Panc1 (cell line): ENCODE measurements at regions of chr4 and their contacts with region 1.

Region 1: GRCh38 chr4:186570193-186570996 is 15.0 kb upstream of the MTNR1A start:
- DNase-seq: no peak
- ATAC-seq: peak; percentile 79
- H3K4me3 ChIP-seq: peak overlapping the region; percentile 26 to 55
- H3K27ac ChIP-seq: peak overlapping the region; percentile 48; the same call in 1 of the 2 replicates
- H3K4me1 ChIP-seq: peaks cover 5% of the 10 kb centered on the region; the same call in 1 of the 2 replicates
- H3K27me3 ChIP-seq: no peaks in the 10 kb centered on the region
- CTCF ChIP-seq: no peak

Region 2: GRCh38 chr4:186304866-186305511 is 265.4 kb before region 1 on chr4:
- CTCF ChIA-PET with region 1: no interaction called
- POLR2A ChIA-PET with region 1: no interaction called
- in situ Hi-C with region 1: no loop called
- intact Hi-C with region 1: loop called (anchors 5 kb)
- DNase-seq: no peak
- ATAC-seq: no peak
- H3K4me3 ChIP-seq: no peak overlapping the region
- H3K27ac ChIP-seq: no peak overlapping the region
- H3K4me1 ChIP-seq: no peaks in the 10 kb centered on the region
- H3K27me3 ChIP-seq: peaks cover 2% of the 10 kb centered on the region; the same call in 1 of the 2 replicates
- CTCF ChIP-seq: no peak